ENCODE measurements at regions of chr11 and their contacts with region 1.

Region 1: DNA sequence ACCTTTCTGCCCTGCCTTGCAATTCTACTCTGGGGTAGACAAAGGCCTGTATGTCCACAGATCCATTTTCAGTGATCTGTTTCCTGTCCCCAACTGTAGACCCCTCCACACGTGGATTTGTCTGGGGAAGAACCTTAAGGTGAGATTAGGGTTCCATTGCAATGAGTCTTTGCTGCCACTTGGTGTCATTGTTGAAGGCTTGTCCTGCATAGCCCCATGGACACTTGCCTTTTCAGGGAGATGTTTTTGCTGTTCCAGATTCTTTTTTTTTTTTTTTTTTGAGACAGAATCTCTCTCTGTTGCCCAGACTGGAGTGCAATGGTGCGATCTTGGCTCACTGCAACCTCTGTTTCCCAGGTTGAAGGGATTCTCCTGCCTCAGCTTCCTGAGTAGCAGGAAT is 21.8 kb downstream of the SERPING1 start:
- DNase-seq: no peak
- H3K4me3 ChIP-seq: no peak overlapping the region
- H3K27ac ChIP-seq: no peak overlapping the region
- H3K4me1 ChIP-seq: no peaks in the 10 kb centered on the region
- H3K27me3 ChIP-seq: no peaks in the 10 kb centered on the region
- CTCF ChIP-seq: peak in 2 of 3 experiments; percentile 52 to 72; a peak in 3 of 4 replicates
- EP300 ChIP-seq: no peak
- POLR2A ChIP-seq: no peak
- RAD21 ChIP-seq: peak; percentile 38 to 61

Region 2: GRCh38 chr11:57604296-57605027 is 14.9 kb before region 1 on chr11:
- CTCF ChIA-PET with region 1: interaction called, 34 read pairs
- POLR2A ChIA-PET with region 1: interaction called, 8 read pairs
- DNase-seq: no peak
- H3K4me3 ChIP-seq: no peak overlapping the region
- H3K27ac ChIP-seq: no peak overlapping the region
- H3K4me1 ChIP-seq: no peaks in the 10 kb centered on the region
- H3K27me3 ChIP-seq: no peaks in the 10 kb centered on the region
- CTCF ChIP-seq: no peak
- EP300 ChIP-seq: no peak
- POLR2A ChIP-seq: no peak
- RAD21 ChIP-seq: no peak

Region 3: GRCh38 chr11:57632116-57632515 is 12.8 kb after region 1 on chr11:
- CTCF ChIA-PET with region 1: interaction called, 11 read pairs
- POLR2A ChIA-PET with region 1: interaction called, 1,546 read pairs
- DNase-seq: no peak
- H3K4me3 ChIP-seq: no peak overlapping the region
- H3K27ac ChIP-seq: no peak overlapping the region
- H3K4me1 ChIP-seq: peaks cover under 1 to 4% (median under 1%) of the 10 kb centered on the region in 4 experiments
- H3K27me3 ChIP-seq: no peaks in the 10 kb centered on the region; a peak in 1 of 7 replicates
- CTCF ChIP-seq: no peak
- EP300 ChIP-seq: no peak
- POLR2A ChIP-seq: no peak
- RAD21 ChIP-seq: no peak

Region 4: DNA sequence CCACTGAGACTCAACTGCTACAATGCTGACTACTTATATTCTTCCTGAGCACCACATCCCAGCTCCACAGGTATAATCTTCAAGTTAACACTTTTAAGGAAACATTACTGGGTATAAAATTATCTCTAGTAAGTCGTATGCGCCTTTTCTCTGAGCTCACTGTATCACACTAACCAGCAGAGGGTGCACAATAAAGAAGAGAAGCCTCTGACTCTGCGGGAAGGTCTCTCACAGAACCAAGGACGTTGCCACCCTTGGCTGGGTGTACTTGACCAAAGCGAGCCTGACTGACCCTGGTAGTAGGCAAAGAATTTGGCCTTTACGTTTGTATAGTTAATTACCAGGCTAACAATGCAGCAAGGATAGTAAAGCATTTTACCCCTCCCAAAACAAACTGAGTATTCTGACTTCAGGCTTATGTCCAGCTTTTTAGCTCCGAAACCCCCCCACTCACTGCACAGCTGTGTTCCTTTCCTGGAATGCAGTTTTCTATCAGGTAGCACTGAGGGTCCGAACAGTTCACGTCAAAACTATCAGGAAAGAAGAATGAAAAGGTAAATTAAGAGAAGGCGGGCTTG is 132.4 kb after region 1 on chr11 and contains the start of gene BTBD18:
- CTCF ChIA-PET with region 1: no interaction called
- POLR2A ChIA-PET with region 1: no interaction called
- DNase-seq: peak in 1 of 2 experiments; percentile 54
- H3K4me3 ChIP-seq: no peak within 1 kb of the TSS
- H3K27ac ChIP-seq: no peak within 1 kb of the TSS; the same call in 1 of the 2 replicates
- H3K4me1 ChIP-seq: no peaks in the 10 kb centered on the region; a peak in 1 of 7 replicates
- H3K27me3 ChIP-seq: no peaks in the 10 kb centered on the region
- CTCF ChIP-seq: peak in 2 of 3 experiments; percentile 58 to 61; a peak in 3 of 4 replicates
- EP300 ChIP-seq: no peak
- POLR2A ChIP-seq: no peak
- RAD21 ChIP-seq: peak; percentile 62 to 78
- total RNA-seq, gene BTBD18: not detected in 2 replicates